Heart left ventricle (tissue), 16 donors: ENCODE measurements at regions of chr12 and their contacts with region 1.

Region 1: GRCh38 chr12:72053604-72054003 is 115.0 kb downstream of the TPH2 start:
- DNase-seq: no peak
- ATAC-seq: no peak
- H3K4me3 ChIP-seq: no peak overlapping the region
- H3K27ac ChIP-seq: no peak overlapping the region
- H3K4me1 ChIP-seq: no peaks in the 10 kb centered on the region
- H3K27me3 ChIP-seq: no peaks in the 10 kb centered on the region
- CTCF ChIP-seq: no peak
- POLR2A ChIP-seq: no peak

Region 2: GRCh38 chr12:71999795-72000194 is 53.8 kb before region 1 on chr12:
- intact Hi-C with region 1: loop called in 1 of 10 experiments (anchors 5 kb)
- DNase-seq: no peak
- ATAC-seq: no peak
- H3K4me3 ChIP-seq: no peak overlapping the region
- H3K27ac ChIP-seq: no peak overlapping the region
- H3K4me1 ChIP-seq: no peaks in the 10 kb centered on the region
- H3K27me3 ChIP-seq: peaks cover 0 to 4% (median 0%) of the 10 kb centered on the region in 9 donors
- CTCF ChIP-seq: no peak
- POLR2A ChIP-seq: no peak

Region 3: GRCh38 chr12:72168851-72169250 is 115.2 kb after region 1 on chr12:
- intact Hi-C with region 1: no loop called
- DNase-seq: no peak
- ATAC-seq: no peak
- H3K4me3 ChIP-seq: no peak overlapping the region
- H3K27ac ChIP-seq: no peak overlapping the region
- H3K4me1 ChIP-seq: no peaks in the 10 kb centered on the region
- H3K27me3 ChIP-seq: no peaks in the 10 kb centered on the region
- CTCF ChIP-seq: no peak
- POLR2A ChIP-seq: no peak